PC-3 (cell line): ENCODE measurements at regions of chr9 and their contacts with region 1.

Region 1: GRCh38 chr9:71249729-71250317 is 128.4 kb upstream of the TRPM3 start:
- DNase-seq: peak; percentile 74
- ATAC-seq: peak; percentile 49
- H3K4me3 ChIP-seq: no peak overlapping the region
- H3K27ac ChIP-seq: no peak overlapping the region
- H3K4me1 ChIP-seq: no peaks in the 10 kb centered on the region
- H3K27me3 ChIP-seq: no peaks in the 10 kb centered on the region
- CTCF ChIP-seq: peak; percentile 84

Region 2: GRCh38 chr9:70924895-70925547 is 324.8 kb before region 1 on chr9:
- CTCF ChIA-PET with region 1: no interaction called
- POLR2A ChIA-PET with region 1: no interaction called
- intact Hi-C with region 1: loop called (anchors 1 kb)
- DNase-seq: peak; percentile 52
- ATAC-seq: peak; percentile 66
- H3K4me3 ChIP-seq: 0 out of 2 replicates have a peak overlapping the region, but pooled peaks have one; percentile 35
- H3K27ac ChIP-seq: no peak overlapping the region
- H3K4me1 ChIP-seq: no peaks in the 10 kb centered on the region
- H3K27me3 ChIP-seq: no peaks in the 10 kb centered on the region; the same call in 1 of the 2 replicates
- CTCF ChIP-seq: peak; percentile 74